T-cell (primary cell): ENCODE measurements at regions of chr3 and their contacts with region 1.

Region 1: DNA sequence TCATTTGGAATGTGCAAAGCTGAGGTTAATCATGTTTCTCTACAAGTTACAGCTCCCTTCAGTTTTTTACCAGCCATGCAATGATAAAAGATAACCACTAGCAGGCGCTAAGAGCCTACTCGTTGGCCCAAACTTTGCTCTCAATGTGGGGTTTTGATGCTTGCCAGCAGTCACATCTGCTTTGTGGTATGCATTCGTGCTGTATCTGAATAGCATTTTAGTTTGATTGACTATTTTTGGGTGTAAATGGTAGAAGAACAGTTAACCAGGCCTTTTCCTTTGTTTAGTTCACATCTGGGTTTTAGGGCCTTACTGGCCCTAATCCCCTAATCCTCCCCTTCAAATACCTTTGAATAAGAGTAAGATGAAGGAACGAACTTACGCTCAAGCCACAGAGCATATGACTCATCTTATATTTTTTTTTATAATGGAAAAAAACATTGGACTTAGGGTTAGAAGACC is 4.4 kb upstream of the CLDN11 start:
- DNase-seq: peak in 19 of 35 experiments; percentile 9 to 65 (median 21)
- ATAC-seq: peak; percentile 49 to 68 (median 58)
- H3K4me3 ChIP-seq: no peak overlapping the region
- H3K4me3 Mint-ChIP-seq: no peak overlapping the region
- H3K27ac ChIP-seq: no peak overlapping the region
- H3K27ac Mint-ChIP-seq: no peak overlapping the region
- H3K4me1 ChIP-seq: peaks cover 0 to 9% of the 10 kb centered on the region in 2 experiments
- H3K4me1 Mint-ChIP-seq: peaks cover 8 to 10% (median 9%) of the 10 kb centered on the region in 3 donors
- H3K27me3 ChIP-seq: peaks cover 5 to 18% of the 10 kb centered on the region in 2 experiments
- H3K27me3 Mint-ChIP-seq: peaks cover 23 to 25% of the 10 kb centered on the region in 2 donors

Region 2: DNA sequence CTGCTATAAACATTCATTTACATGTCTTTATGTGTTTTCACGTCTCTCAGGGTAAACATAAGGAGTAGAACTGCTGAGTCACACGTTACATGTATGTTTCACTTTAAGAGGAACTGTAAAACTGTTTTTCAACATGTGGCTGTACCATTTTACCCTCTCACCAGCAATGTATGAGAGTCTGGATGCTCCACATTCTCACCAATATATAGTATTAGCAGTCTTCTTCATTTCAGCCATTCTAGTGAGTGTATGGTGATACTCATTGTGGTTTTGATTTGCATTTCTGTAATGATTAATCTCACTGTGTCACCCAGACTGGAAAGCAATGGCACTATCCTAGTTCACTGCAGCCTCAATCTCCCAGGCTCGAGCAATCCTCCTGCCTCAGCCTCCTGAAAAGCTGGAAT is 269.8 kb before region 1 on chr3:
- CTCF ChIA-PET with region 1: interaction called in 1 of 2 experiments, 12 read pairs
- POLR2A ChIA-PET with region 1: no interaction called
- DNase-seq: no peak
- ATAC-seq: no peak
- H3K4me3 ChIP-seq: no peak overlapping the region
- H3K4me3 Mint-ChIP-seq: no peak overlapping the region
- H3K27ac ChIP-seq: no peak overlapping the region
- H3K27ac Mint-ChIP-seq: peak overlapping the region in 1 of 2 donors; percentile 43
- H3K4me1 ChIP-seq: peaks cover 3 to 4% of the 10 kb centered on the region in 2 experiments
- H3K4me1 Mint-ChIP-seq: peaks cover 30 to 43% (median 42%) of the 10 kb centered on the region in 3 donors
- H3K27me3 ChIP-seq: no peaks in the 10 kb centered on the region
- H3K27me3 Mint-ChIP-seq: no peaks in the 10 kb centered on the region

Region 3: DNA sequence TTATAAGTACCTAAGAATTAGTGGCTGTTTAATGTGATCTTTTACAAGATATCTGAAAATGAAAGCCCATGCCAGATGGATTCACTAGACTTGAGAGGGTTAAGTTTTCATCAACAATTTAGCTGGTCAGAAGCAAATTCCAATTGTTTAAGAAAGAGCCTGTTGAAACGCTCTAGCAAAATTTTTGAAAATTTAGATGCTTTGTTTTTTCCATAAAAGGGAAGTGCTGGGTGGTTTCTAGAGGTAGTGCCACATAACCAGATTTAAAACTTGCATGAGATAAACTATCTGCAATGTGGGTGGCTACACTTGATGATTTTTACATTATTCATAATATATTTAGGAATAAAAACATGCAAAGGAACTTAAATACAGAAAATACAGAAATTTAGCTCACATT is 105.2 kb before region 1 on chr3:
- CTCF ChIA-PET with region 1: interaction called in 1 of 2 experiments, 10 read pairs
- POLR2A ChIA-PET with region 1: no interaction called
- DNase-seq: no peak
- ATAC-seq: no peak
- H3K4me3 ChIP-seq: no peak overlapping the region
- H3K4me3 Mint-ChIP-seq: no peak overlapping the region
- H3K27ac ChIP-seq: no peak overlapping the region
- H3K27ac Mint-ChIP-seq: no peak overlapping the region
- H3K4me1 ChIP-seq: no peaks in the 10 kb centered on the region
- H3K4me1 Mint-ChIP-seq: no peaks in the 10 kb centered on the region
- H3K27me3 ChIP-seq: no peaks in the 10 kb centered on the region
- H3K27me3 Mint-ChIP-seq: no peaks in the 10 kb centered on the region

Region 4: DNA sequence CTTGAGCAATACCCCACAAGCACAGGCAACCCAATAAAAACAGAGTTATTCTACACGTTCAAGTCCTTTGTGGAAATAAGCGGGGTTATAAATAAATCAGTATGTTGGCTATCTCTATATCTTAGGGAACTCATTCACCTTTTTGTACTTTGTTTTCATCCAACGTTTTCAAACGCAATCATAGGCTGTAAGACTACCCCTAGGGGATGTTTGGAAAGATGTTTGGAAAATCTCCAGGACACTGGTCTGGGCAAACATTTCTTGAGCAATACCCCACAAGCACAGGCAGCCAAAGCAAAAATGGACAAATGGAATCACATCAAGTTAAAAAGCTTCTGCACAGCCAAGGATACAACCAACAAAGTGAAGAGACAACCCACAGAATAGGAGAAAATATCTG is 74.6 kb after region 1 on chr3:
- CTCF ChIA-PET with region 1: no interaction called
- POLR2A ChIA-PET with region 1: no interaction called
- DNase-seq: no peak
- ATAC-seq: no peak
- H3K4me3 ChIP-seq: no peak overlapping the region
- H3K4me3 Mint-ChIP-seq: no peak overlapping the region
- H3K27ac ChIP-seq: no peak overlapping the region
- H3K27ac Mint-ChIP-seq: no peak overlapping the region
- H3K4me1 ChIP-seq: no peaks in the 10 kb centered on the region
- H3K4me1 Mint-ChIP-seq: no peaks in the 10 kb centered on the region
- H3K27me3 ChIP-seq: peaks cover 0 to 7% of the 10 kb centered on the region in 2 experiments
- H3K27me3 Mint-ChIP-seq: peaks cover 7 to 14% of the 10 kb centered on the region in 2 donors

Region 5: GRCh38 chr3:170585937-170586310 is 171.7 kb after region 1 on chr3 and contains the start of gene SLC7A14:
- CTCF ChIA-PET with region 1: no interaction called
- POLR2A ChIA-PET with region 1: no interaction called
- DNase-seq: no peak
- ATAC-seq: no peak
- H3K4me3 ChIP-seq: no peak within 1 kb of the TSS
- H3K4me3 Mint-ChIP-seq: no peak within 1 kb of the TSS
- H3K27ac ChIP-seq: no peak within 1 kb of the TSS
- H3K27ac Mint-ChIP-seq: no peak within 1 kb of the TSS
- H3K4me1 ChIP-seq: no peaks in the 10 kb centered on the region
- H3K4me1 Mint-ChIP-seq: peaks cover 0 to 4% (median 0%) of the 10 kb centered on the region in 3 donors
- H3K27me3 ChIP-seq: peaks cover 8 to 22% of the 10 kb centered on the region in 2 experiments
- H3K27me3 Mint-ChIP-seq: peaks cover 53 to 55% of the 10 kb centered on the region in 2 donors
- total RNA-seq, gene SLC7A14: not detected

Region 6: GRCh38 chr3:170811928-170812591 is 397.8 kb after region 1 on chr3:
- CTCF ChIA-PET with region 1: interaction called, 10 to 18 read pairs
- POLR2A ChIA-PET with region 1: no interaction called
- DNase-seq: peak; percentile 23 to 80 (median 52)
- ATAC-seq: peak; percentile 81 to 86 (median 84)
- H3K4me3 ChIP-seq: no peak overlapping the region
- H3K4me3 Mint-ChIP-seq: no peak overlapping the region
- H3K27ac ChIP-seq: no peak overlapping the region
- H3K27ac Mint-ChIP-seq: no peak overlapping the region
- H3K4me1 ChIP-seq: no peaks in the 10 kb centered on the region
- H3K4me1 Mint-ChIP-seq: peaks cover 0 to 3% (median 2%) of the 10 kb centered on the region in 3 donors
- H3K27me3 ChIP-seq: peaks cover 0 to 3% of the 10 kb centered on the region in 2 experiments
- H3K27me3 Mint-ChIP-seq: no peaks in the 10 kb centered on the region

Region 7: DNA sequence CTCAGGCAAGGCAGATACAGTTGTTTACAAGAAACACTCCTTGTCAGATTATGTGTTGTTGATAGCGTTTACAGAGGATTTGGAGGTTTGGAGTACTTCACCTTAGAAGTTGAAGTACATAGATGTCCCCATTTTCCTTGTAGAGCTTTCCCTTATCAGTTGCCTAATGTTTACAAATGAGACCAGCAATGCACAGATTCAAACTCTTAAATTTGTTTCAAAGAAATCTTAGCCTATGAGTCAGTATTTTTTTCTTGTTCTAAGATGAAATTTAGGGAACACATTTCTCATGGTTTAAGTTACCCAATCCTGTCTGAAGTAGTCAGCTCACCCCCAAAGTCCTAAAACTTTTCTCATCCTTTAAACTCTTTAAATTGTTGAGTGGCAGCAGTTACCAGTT is 500.5 kb after region 1 on chr3:
- CTCF ChIA-PET with region 1: no interaction called
- POLR2A ChIA-PET with region 1: no interaction called
- DNase-seq: no peak
- ATAC-seq: no peak
- H3K4me3 ChIP-seq: no peak overlapping the region
- H3K4me3 Mint-ChIP-seq: no peak overlapping the region
- H3K27ac ChIP-seq: no peak overlapping the region
- H3K27ac Mint-ChIP-seq: no peak overlapping the region
- H3K4me1 ChIP-seq: no peaks in the 10 kb centered on the region
- H3K4me1 Mint-ChIP-seq: no peaks in the 10 kb centered on the region
- H3K27me3 ChIP-seq: no peaks in the 10 kb centered on the region
- H3K27me3 Mint-ChIP-seq: peaks cover 0 to 4% of the 10 kb centered on the region in 2 donors